ENCODE measurements at regions of chr13 and their contacts with region 1.

Region 1: DNA sequence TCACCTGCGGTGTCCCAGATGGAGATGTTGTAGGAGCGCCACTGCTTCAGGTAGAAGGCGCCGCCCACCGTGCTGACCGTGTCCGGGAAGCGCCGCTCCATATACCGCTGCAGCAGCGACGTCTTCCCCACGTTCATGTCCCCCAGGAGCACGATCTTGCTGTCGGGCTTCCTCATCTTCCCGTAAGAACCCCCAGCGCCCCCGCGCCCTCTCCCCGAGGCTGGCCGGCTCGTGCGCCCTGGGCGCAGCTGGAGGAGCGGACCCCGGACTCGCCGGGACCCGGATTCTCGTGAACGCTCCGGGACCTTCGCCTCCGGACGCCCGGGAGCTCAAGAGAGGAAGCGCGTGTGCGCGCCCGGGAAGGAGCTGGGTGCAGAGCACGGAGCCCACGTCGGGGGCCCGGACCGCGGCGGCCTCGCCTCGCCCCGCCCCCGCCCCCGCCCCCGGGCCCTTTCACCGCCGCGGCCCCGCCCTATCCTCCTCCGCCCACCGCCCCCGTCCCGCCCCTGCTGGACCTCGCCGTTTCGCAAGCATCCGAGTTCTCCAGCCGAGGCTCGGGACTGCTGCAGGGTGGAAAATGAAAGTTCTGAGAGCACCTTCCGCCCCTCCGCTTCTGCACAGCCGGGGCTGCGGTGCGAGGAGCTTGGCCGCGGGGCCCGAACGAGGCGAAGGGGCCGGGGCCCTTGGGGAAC is at the start of gene RAB20:
- DNase-seq: peak; percentile 93
- H3K4me3 ChIP-seq: peak within 1 kb of the TSS; percentile 59 to 76
- H3K27ac ChIP-seq: peak within 1 kb of the TSS; percentile 89 to 93
- H3K4me1 ChIP-seq: no peaks in the 10 kb centered on the region
- H3K27me3 ChIP-seq: no peaks in the 10 kb centered on the region
- CTCF ChIP-seq: peak in 1 of 4 experiments; percentile 4
- POLR2A ChIP-seq: peak; percentile 67
- total RNA-seq, gene RAB20: 24.0 to 42.1 TPM

Region 2: DNA sequence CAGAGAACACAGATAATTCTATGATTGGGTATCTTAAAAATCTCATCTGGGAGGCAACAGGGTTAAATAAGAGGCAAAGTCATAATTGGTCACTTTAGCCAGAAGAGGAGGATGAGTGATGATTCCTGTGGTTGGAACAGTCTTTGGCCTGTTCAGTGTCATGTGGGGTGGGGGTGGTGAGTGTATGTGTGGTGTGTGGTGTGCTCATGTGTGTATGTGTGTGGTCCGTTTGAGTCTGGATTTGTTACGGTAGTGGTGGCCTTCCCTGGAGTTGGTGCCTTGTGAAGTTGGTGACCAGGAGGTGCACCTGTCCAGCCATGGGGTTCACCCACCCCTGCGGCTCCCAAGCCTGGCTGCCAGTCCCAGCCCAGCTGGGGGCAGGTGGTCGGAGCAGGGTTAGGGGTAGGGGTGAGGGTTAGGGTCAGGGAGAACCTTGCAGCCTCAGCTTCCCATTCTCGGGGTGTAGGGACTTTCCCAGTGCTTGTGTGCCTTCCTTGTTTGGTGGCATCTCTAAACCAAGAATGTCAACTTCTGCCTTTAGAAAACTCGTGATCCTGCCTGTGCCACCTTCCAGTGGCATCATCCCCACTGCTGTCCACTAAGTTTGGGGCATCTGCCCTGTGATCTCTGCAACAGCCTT is 97.5 kb before region 1 on chr13:
- intact Hi-C with region 1: loop called (anchors 5 kb)
- DNase-seq: no peak
- H3K4me3 ChIP-seq: no peak overlapping the region
- H3K27ac ChIP-seq: no peak overlapping the region
- H3K4me1 ChIP-seq: no peaks in the 10 kb centered on the region
- H3K27me3 ChIP-seq: no peaks in the 10 kb centered on the region
- CTCF ChIP-seq: no peak
- POLR2A ChIP-seq: no peak

Region 3: DNA sequence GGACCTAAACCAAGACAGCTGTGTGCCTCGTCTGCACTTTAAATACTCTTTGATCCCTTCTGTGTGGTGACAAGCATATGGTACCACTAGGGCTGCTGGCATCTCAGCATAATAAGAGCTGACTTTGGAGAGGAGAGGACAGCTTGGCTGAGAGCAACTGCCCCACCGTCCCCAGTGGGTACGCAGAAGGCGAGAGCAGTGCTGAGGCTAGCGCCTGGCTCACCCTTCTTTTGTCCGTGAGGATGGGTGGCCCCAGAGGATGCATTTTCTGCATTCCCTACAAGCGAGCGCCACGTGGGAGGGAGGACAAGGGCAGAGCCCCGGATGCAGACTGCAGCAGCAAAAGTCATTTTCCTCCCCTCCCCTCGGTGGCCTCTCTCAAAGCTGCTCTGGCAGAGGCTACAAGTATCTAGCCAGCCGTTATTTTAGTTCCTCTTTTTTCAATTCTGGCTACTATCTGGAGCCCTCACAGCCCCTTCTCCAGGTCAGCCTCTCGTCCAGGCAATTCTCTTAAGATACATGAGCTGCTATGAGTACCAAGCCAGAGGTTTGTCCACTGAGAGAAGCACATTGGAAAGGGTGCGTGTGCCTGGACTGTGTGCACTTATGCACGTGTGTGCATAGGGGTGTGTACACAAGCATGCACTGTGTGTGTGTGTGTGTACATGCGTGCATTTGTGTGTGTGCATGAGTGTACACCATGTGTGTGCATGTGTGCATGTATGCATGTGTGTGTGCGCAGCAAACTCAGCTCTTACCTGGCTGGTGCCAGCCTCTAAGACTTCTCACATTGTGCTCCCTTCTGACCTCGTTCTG is 51.3 kb before region 1 on chr13:
- intact Hi-C with region 1: loop called (anchors 5 kb)
- DNase-seq: no peak
- H3K4me3 ChIP-seq: no peak overlapping the region
- H3K27ac ChIP-seq: no peak overlapping the region
- H3K4me1 ChIP-seq: no peaks in the 10 kb centered on the region
- H3K27me3 ChIP-seq: no peaks in the 10 kb centered on the region
- CTCF ChIP-seq: no peak
- POLR2A ChIP-seq: no peak

Region 4: GRCh38 chr13:110520431-110521295 is 40.8 kb before region 1 on chr13:
- intact Hi-C with region 1: loop called (anchors 5 kb)
- DNase-seq: no peak
- H3K4me3 ChIP-seq: no peak overlapping the region
- H3K27ac ChIP-seq: peak overlapping the region in 1 of 2 donors; percentile 41
- H3K4me1 ChIP-seq: no peaks in the 10 kb centered on the region
- H3K27me3 ChIP-seq: no peaks in the 10 kb centered on the region
- CTCF ChIP-seq: no peak
- POLR2A ChIP-seq: no peak

Region 5: DNA sequence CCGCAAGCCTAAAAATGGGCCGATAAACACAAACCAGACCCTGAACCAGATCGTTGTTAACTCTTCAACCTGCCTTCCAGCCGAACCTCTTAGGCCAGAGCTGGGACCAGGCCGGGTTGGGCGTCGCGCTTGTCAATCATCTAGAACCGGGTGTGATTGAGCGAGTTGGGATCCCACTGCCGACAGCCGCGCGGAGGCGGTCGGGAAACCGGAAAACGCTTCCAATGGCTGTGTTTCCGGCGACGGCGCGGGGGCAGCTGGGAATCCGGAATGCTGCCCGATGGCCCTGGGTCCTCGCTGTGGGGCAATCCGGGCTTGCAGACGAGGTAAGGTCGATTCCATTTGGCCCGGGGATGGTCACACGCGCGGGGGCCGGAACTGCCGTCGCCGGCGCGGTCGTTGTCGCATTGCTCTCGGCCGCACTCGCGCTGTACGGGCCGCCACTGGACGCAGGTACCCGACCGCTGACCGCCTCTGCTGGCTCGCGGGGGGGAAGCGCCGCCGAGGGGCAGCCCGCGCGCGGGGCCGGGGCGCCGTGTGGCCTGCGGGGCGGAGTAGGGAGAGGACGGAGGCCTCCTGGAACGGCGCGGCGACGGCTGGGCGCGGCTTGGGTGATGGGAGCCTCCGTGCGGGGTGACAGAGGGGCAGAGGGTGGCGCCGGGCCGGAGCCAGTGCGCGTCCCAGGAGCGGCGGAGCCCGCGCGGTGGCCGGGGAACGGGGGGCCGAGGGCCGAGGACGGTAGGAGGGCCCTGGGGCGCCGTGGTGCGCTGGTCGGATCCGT is 54.0 kb after region 1 on chr13 and contains the start of gene NAXD:
- intact Hi-C with region 1: loop called (anchors 5 kb)
- DNase-seq: peak; percentile 85
- H3K4me3 ChIP-seq: peak within 1 kb of the TSS; percentile 92 to 96
- H3K27ac ChIP-seq: peak within 1 kb of the TSS; percentile 86 to 90
- H3K4me1 ChIP-seq: peaks cover 14% of the 10 kb centered on the region
- H3K27me3 ChIP-seq: no peaks in the 10 kb centered on the region
- CTCF ChIP-seq: peak in 2 of 4 experiments; percentile 20 to 21
- POLR2A ChIP-seq: peak; percentile 58
- total RNA-seq, gene NAXD: 36.2 to 71.6 TPM